Posterior cingulate gyrus (tissue), 11 donors: ENCODE measurements at regions of chr12 and their contacts with region 1.

Region 1: DNA sequence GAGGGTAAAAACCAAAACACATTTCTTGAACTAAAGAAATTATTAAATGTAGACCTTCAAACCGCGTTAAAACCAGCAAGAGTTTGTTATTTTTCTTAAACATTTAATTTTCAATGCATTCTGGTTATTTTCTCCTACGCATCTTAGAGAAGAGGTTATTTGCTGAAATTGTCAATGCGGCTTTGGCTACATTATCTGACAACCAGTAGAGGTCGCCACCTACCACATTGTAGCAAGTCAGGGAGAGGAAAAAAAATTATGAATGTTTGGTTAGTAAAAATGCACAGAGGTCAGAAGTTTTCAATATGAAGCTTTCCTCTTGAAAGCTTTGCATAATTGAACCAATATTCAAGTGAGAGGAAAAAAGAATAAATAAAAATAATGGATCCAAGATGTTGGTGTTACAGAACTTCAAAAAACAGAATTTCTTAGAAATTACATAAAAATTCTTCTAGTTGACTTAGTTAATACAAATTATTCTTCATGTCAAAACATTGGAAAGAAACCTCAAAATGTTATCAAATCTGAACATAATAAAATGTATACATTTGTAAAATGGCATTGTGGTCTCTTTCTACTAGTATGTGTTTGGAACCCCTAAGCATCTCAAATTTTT is 159.4 kb upstream of the TMTC2 start:
- DNase-seq: peak in 6 of 10 donors; percentile 31 to 79 (median 42)

Region 2: DNA sequence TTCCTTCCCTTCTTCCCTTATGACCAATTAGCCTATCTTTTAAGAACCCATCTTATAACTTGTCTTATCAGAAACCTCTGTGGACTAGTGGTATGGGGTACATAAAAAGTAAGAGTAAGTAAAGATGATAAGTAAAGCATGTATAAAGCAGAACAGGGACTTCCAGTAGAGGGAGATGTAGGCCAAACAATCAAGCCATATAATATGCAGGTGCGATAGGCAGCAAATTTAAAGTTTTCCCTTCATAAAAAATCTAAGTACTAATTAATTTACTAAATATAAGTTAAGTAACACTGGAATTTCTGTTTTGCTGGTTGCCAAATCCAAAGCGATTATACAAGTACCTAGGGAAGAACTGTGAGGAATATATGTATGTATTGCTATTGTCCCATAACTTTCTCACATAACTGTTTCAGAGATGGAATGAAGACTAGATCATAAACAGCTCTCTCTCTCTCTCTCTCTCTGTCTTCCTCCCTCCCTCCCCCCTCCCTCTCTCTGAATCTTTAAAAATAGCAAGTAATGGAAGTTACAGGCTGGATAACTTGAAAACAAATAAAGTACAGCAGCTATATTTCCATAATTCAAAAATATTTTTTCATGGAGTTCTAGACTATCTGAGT is 143.2 kb before region 1 on chr12:
- intact Hi-C with region 1: loop called (anchors 10 kb)
- DNase-seq: no peak

Region 3: DNA sequence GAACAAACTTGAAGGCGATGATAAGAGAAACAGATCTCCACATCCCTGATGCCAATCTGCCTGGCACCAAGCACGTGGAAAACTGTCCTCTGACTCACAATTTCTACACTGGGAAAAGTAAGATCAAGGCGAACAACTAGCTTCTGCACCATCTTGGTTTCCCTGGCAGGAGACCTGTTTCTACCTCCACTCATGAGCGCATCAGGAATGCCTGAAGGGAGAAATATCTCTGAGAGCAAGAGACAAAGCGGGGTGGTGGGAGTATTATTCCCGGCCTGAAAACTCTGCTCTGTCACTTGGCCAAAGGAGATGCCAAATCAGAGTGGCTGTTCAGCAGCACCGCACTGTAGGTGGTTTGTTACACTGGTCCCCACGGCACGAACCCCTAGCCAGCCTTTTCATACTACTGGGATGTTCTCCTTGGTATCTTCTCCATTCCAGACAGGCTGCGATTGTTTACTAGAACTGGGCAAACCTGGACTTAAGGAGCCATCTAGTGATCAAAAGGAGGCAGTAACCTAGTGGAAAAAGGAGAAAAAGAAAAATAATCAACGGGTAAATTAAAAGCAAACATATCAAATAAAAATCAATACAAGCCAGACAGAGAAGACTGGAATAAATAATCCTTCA is 100.4 kb after region 1 on chr12:
- intact Hi-C with region 1: loop called (anchors 1 kb)
- DNase-seq: peak in 1 of 10 donors; percentile 59

Region 4: GRCh38 chr12:84502907-84503787 is 1975.9 kb after region 1 on chr12:
- intact Hi-C with region 1: loop called (anchors 5 kb)
- DNase-seq: peak in 7 of 10 donors; percentile 28 to 86 (median 48)